Heart left ventricle (tissue), 16 donors: ENCODE measurements at regions of chr3 and their contacts with region 1.

Region 1: DNA sequence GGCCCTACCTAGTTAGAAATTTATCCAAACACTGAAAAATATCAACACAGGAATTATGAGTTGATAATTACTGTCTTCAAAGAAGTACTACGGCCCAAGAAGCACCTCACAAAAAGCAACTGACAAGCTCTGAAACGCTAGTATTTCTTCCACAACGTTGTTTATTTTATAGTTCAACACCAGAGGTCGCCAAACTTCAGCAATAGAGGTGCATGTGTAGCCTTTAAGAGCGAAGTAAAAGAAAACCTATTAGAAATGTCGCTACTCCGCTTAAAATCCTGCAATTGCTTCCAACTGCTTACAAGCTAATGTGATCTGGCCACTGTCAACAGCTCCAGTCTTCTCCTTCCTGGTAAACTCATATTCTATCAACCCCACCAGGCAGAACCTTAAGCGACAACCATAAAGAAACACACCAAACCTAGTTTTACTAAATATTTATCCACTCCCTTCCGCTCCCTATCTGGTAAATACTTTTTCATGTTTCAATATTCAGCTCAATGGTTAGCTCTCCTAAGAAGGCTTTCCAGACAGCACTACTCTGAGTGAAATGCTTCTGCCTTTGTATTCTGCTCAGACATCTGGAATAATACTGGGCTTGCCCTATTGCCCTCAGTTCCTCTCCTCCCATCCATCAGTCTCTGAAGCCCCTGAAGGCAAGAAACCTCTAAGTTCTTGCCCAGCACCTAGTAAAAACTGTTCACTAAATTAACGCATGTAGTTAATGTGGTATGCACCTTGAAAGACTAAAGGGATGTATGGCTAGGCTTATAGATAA is 110.2 kb downstream of the NR1I2 start:
- DNase-seq: peak in 2 of 5 donors; percentile 30 to 45
- ATAC-seq: peak; percentile 64 to 81 (median 74)
- H3K4me3 ChIP-seq: no peak overlapping the region
- H3K27ac ChIP-seq: no peak overlapping the region
- H3K4me1 ChIP-seq: peaks cover 0 to 11% (median 7%) of the 10 kb centered on the region in 12 donors
- H3K27me3 ChIP-seq: no peaks in the 10 kb centered on the region
- CTCF ChIP-seq: peak; percentile 36 to 84 (median 78)
- POLR2A ChIP-seq: no peak

Region 2: DNA sequence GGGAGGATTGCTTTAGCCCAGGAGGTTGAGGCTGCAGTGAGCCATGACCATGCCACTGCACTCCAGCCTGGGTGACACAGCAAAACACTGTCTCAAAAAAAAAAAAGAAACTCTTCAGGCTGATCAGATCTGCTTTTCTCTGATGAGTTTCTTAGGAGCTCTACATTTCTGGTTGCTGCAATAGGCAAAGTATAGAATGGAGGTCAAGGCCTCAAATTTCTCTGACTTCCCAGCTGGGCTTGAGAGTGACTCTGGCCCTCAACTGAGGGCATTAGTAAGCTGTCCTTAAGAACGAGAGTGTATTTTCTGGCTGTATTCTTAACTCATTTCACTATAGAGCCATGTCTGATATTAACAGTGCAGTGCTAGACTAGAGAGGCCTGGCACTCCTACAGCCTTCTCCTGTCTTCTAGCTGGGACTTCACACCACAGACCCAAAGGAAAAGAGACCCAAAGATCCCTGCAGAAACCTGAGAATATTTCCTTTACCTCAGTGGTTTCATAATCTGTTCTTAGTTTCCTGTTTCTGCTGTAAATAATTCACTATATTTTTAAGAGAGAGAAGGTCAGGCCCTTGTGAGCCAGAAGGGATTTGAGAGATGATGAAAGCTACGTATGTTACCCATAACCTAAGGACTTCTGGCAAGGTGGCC is 112.3 kb before region 1 on chr3:
- intact Hi-C with region 1: no loop called
- DNase-seq: no peak
- ATAC-seq: no peak
- H3K4me3 ChIP-seq: no peak overlapping the region
- H3K27ac ChIP-seq: no peak overlapping the region
- H3K4me1 ChIP-seq: peaks cover 0 to 5% (median 0%) of the 10 kb centered on the region in 12 donors
- H3K27me3 ChIP-seq: no peaks in the 10 kb centered on the region
- CTCF ChIP-seq: no peak
- POLR2A ChIP-seq: no peak

Region 3: GRCh38 chr3:120147072-120147871 is 255.1 kb after region 1 on chr3:
- intact Hi-C with region 1: loop called in 1 of 10 experiments (anchors 2 kb)
- DNase-seq: no peak
- ATAC-seq: peak in 3 of 4 donors; percentile 27 to 70 (median 33)
- H3K4me3 ChIP-seq: no peak overlapping the region
- H3K27ac ChIP-seq: peak overlapping the region in 11 of 12 donors; percentile 19 to 77 (median 50)
- H3K4me1 ChIP-seq: peaks cover 0 to 21% (median 12%) of the 10 kb centered on the region in 12 donors
- H3K27me3 ChIP-seq: no peaks in the 10 kb centered on the region
- CTCF ChIP-seq: peak in 3 of 12 donors; percentile 4 to 13 (median 7)
- POLR2A ChIP-seq: no peak

Region 4: DNA sequence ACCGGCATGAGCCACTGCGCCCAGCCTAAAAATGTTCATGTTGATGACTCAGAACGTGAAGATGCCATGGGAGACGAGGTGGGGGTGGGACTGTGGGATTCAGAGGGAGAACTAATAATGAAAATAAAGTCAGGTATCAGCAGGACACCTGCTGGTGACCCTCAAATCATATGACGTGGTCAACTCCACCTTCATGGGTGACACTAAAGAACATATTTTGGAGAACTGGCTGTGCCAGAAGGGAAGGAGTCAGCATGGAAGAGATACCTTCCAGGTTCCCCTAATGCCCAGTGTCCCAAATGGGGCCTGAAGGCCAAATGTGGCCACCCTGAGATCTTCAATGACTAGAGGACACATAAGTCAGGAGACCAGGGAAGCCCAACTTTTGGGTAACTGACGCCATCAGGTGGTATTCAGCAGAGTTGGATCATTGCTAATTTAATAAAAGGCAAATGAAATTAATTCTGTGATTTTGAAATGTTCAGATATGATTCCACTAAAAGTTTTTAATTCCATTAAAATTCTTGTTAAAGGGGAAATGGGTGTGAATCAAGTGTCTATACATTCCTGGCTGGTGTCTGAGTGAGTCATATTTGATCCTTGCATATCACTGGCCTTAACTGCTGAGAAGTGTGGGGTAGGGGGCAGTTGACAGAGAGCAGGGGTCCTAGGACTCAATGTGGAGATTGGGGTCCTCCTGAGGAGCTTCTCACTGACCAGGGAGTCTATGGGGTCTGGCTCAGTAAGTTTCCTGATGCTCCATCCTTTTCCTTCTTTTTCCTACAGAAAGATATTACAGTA is 290.8 kb after region 1 on chr3:
- intact Hi-C with region 1: loop called in 9 of 10 experiments (anchors 1 to 5 kb)
- DNase-seq: no peak
- ATAC-seq: peak in 2 of 4 donors; percentile 46 to 50
- H3K4me3 ChIP-seq: no peak overlapping the region
- H3K27ac ChIP-seq: no peak overlapping the region
- H3K4me1 ChIP-seq: peaks cover 0 to 3% (median 0%) of the 10 kb centered on the region in 12 donors
- H3K27me3 ChIP-seq: no peaks in the 10 kb centered on the region
- CTCF ChIP-seq: peak; percentile 15 to 56 (median 38)
- POLR2A ChIP-seq: no peak

Region 5: GRCh38 chr3:120198305-120198878 is 306.3 kb after region 1 on chr3:
- intact Hi-C with region 1: loop called in 7 of 10 experiments (anchors 5 kb)
- DNase-seq: no peak
- ATAC-seq: peak in 3 of 4 donors; percentile 28 to 36 (median 35)
- H3K4me3 ChIP-seq: no peak overlapping the region
- H3K27ac ChIP-seq: no peak overlapping the region
- H3K4me1 ChIP-seq: peaks cover 0 to 12% (median 5%) of the 10 kb centered on the region in 12 donors
- H3K27me3 ChIP-seq: no peaks in the 10 kb centered on the region
- CTCF ChIP-seq: peak in 7 of 12 donors; percentile 18 to 43 (median 35)
- POLR2A ChIP-seq: no peak